ENCODE measurements at regions of chr3 and their contacts with region 1.

Region 1: GRCh38 chr3:17032407-17033034 is 147.8 kb downstream of the PLCL2 start:
- DNase-seq: no peak
- H3K4me3 ChIP-seq: no peak overlapping the region
- H3K27ac ChIP-seq: no peak overlapping the region
- H3K4me1 ChIP-seq: no peaks in the 10 kb centered on the region
- H3K27me3 ChIP-seq: no peaks in the 10 kb centered on the region
- CTCF ChIP-seq: peak; percentile 53 to 80 (median 58)

Region 2: DNA sequence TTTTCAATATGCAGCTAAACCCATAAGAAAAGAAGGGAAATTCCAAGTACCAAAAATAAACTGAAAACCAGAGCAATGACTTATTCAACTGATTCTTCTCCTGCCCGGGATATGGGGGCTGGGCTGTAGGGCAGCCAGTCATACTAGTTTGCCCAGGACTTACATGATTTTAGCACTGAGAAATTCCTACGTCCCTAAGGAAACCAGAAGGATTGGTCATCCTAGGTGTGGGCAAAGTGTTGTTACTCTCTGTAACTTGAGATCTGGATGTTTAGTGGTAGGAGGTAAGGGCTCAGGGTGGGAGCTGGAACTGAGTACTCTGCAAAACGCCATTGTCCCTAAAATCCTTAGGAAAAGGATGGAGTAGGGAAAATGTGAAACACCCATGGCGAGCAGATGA is 426.1 kb before region 1 on chr3:
- intact Hi-C with region 1: loop called (anchors 2 kb)
- DNase-seq: no peak
- H3K4me3 ChIP-seq: no peak overlapping the region
- H3K27ac ChIP-seq: no peak overlapping the region
- H3K4me1 ChIP-seq: no peaks in the 10 kb centered on the region
- H3K27me3 ChIP-seq: no peaks in the 10 kb centered on the region
- CTCF ChIP-seq: no peak

Region 3: DNA sequence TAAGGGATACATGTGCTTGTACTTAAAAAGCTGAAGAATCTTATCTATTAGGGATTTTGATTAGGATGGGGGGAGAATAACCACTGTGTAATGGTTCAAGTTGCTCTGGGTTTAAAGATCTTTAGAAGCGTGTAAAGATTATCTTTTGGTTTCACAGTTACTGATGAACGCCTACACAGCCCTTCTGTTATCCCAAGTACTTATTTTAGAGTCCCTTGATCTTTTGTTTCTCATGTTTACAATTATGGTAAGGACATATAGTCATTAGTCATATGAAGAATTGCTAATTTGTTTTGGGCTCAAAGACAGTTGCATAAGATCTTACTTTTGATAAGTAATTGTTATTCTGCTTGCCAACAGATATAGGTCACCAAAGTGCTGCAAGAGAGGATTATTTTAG is 12.3 kb after region 1 on chr3:
- intact Hi-C with region 1: no loop called
- DNase-seq: no peak
- H3K4me3 ChIP-seq: no peak overlapping the region
- H3K27ac ChIP-seq: no peak overlapping the region
- H3K4me1 ChIP-seq: no peaks in the 10 kb centered on the region
- H3K27me3 ChIP-seq: no peaks in the 10 kb centered on the region
- CTCF ChIP-seq: no peak